Naive thymus-derived CD4-positive, alpha-beta T cell (primary cell): ENCODE measurements at regions of chr4 and their contacts with region 1.

Region 1: DNA sequence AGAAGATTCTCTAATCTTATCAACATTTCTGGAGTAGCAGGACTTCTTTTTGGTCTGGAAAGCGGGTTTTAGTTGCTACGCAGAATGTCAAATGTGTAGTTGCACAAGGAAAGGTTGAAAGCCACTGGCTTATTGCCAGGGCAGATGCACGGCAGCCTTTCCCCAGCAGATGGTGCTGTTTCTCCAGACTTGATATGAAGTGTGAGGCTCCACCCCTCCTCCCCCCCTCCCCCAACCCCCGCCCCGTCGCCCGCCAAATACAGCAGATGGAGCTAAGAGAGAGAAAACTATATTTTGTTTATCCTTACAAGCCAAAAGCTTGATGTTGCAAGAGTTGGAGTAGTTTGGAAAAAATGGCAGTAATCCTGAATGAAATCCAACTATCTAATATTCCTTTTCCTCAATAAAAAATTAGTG is 32.0 kb downstream of the ENOPH1 start:
- DNase-seq: peak; percentile 60 to 83 (median 79)
- ATAC-seq: peak; percentile 96
- H3K4me3 ChIP-seq: no peak overlapping the region
- H3K4me3 Mint-ChIP-seq: no peak overlapping the region
- H3K27ac ChIP-seq: no peak overlapping the region
- H3K27ac Mint-ChIP-seq: peak overlapping the region in 1 of 9 donors; percentile 34
- H3K4me1 ChIP-seq: no peaks in the 10 kb centered on the region
- H3K4me1 Mint-ChIP-seq: peaks cover 0 to 5% (median 0%) of the 10 kb centered on the region in 7 donors
- H3K27me3 ChIP-seq: no peaks in the 10 kb centered on the region
- H3K27me3 Mint-ChIP-seq: no peaks in the 10 kb centered on the region

Region 2: GRCh38 chr4:82739316-82740179 is 277.1 kb after region 1 on chr4:
- CTCF ChIA-PET with region 1: interaction called, 5 read pairs
- POLR2A ChIA-PET with region 1: no interaction called
- intact Hi-C with region 1: loop called in 1 of 2 experiments (anchors 1 kb)
- DNase-seq: peak in 8 of 9 donors; percentile 10 to 83 (median 32)
- ATAC-seq: peak; percentile 98
- H3K4me3 ChIP-seq: no peak overlapping the region
- H3K4me3 Mint-ChIP-seq: no peak overlapping the region
- H3K27ac ChIP-seq: no peak overlapping the region
- H3K27ac Mint-ChIP-seq: no peak overlapping the region
- H3K4me1 ChIP-seq: no peaks in the 10 kb centered on the region
- H3K4me1 Mint-ChIP-seq: peaks cover 0 to 2% (median 0%) of the 10 kb centered on the region in 7 donors
- H3K27me3 ChIP-seq: no peaks in the 10 kb centered on the region
- H3K27me3 Mint-ChIP-seq: peaks cover 3 to 18% (median 5%) of the 10 kb centered on the region in 5 donors

Region 3: DNA sequence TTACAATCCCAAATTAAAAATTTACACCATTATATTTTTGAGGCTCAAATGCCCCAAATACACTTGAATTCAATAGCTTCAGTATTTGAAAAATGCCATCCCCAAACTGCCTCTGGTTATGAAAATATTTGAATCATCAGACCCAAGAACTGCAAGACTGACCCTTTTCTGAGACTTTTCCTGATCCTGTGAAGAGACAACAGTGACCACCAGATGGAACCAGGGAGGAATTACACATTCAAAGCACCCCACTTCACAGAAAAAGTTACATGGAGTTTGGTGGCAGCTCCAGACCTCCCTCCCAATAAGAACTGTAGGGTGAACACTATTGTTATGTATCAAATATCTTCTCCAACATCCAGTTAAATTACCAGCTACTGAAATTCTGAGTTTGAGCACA is 380.2 kb after region 1 on chr4:
- CTCF ChIA-PET with region 1: no interaction called
- POLR2A ChIA-PET with region 1: no interaction called
- intact Hi-C with region 1: loop called in 1 of 2 experiments (anchors 10 kb)
- DNase-seq: peak in 1 of 9 donors; percentile 10
- ATAC-seq: no peak
- H3K4me3 ChIP-seq: no peak overlapping the region
- H3K4me3 Mint-ChIP-seq: no peak overlapping the region
- H3K27ac ChIP-seq: no peak overlapping the region
- H3K27ac Mint-ChIP-seq: peak overlapping the region in 1 of 9 donors; percentile 59
- H3K4me1 ChIP-seq: no peaks in the 10 kb centered on the region
- H3K4me1 Mint-ChIP-seq: peaks cover 0 to 6% (median 0%) of the 10 kb centered on the region in 7 donors
- H3K27me3 ChIP-seq: no peaks in the 10 kb centered on the region
- H3K27me3 Mint-ChIP-seq: no peaks in the 10 kb centered on the region